ENCODE measurements at regions of chr4 and their contacts with region 1.

Region 1: DNA sequence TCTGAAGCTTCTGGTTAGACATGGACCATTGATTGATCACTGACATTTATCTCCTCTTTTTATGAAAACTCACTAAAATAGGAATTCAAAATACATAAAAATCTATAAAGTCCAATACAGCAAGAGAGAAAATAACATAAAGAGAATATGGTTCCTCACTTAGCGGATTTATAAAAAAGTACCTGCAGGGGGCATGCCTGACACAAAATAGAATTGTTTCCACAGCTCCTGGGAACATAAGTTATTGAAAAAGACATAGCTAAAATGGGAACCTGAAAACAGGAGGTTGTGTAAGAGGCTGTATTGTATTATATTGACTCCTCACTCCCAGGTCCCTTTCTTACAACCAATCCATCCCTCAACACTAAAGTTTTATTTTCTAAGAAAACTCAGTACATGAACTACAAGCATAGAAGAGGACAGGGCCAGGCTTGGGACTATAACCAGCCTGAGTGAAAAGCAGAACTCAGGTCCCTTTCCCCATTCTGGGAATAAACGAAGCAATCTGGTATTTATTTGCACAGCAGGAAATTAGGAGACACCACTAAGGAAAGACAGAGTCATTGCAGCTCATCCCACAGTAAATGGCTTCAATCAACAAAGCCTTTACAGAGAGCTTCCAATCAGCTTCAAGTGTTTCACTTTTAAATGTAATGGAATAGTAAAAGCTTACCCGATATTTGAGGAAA is 121.1 kb upstream of the NDST4 start:
- DNase-seq: peak; percentile 37
- H3K4me3 ChIP-seq: no peak overlapping the region
- H3K27ac ChIP-seq: no peak overlapping the region
- H3K4me1 ChIP-seq: no peaks in the 10 kb centered on the region
- CTCF ChIP-seq: peak; percentile 84

Region 2: GRCh38 chr4:115537387-115537786 is 302.8 kb after region 1 on chr4:
- CTCF ChIA-PET with region 1: no interaction called
- POLR2A ChIA-PET with region 1: no interaction called
- intact Hi-C with region 1: loop called (anchors 10 kb)
- DNase-seq: peak; percentile 1
- H3K4me3 ChIP-seq: no peak overlapping the region
- H3K27ac ChIP-seq: no peak overlapping the region
- H3K4me1 ChIP-seq: no peaks in the 10 kb centered on the region
- CTCF ChIP-seq: peak; percentile 64

Region 3: GRCh38 chr4:115781528-115782146 is 547.1 kb after region 1 on chr4:
- CTCF ChIA-PET with region 1: no interaction called
- POLR2A ChIA-PET with region 1: no interaction called
- intact Hi-C with region 1: loop called (anchors 10 kb)
- DNase-seq: peak; percentile 27
- H3K4me3 ChIP-seq: no peak overlapping the region
- H3K27ac ChIP-seq: peak overlapping the region; percentile 19
- H3K4me1 ChIP-seq: peaks cover 14% of the 10 kb centered on the region
- CTCF ChIP-seq: no peak

Region 4: GRCh38 chr4:115851918-115852766 is 617.6 kb after region 1 on chr4:
- CTCF ChIA-PET with region 1: no interaction called
- POLR2A ChIA-PET with region 1: no interaction called
- intact Hi-C with region 1: loop called (anchors 10 kb)
- DNase-seq: peak; percentile 58
- H3K4me3 ChIP-seq: no peak overlapping the region
- H3K27ac ChIP-seq: no peak overlapping the region
- H3K4me1 ChIP-seq: no peaks in the 10 kb centered on the region
- CTCF ChIP-seq: peak; percentile 83